ENCODE measurements at regions of chr13 and their contacts with region 1.

Region 1: GRCh38 chr13:48184260-48184659 is 48.7 kb upstream of the ITM2B start:
- DNase-seq: no peak
- H3K4me3 ChIP-seq: no peak overlapping the region
- H3K4me3 Mint-ChIP-seq: peak overlapping the region; percentile 2 to 87 (median 39)
- H3K27ac ChIP-seq: no peak overlapping the region
- H3K27ac Mint-ChIP-seq: peak overlapping the region; percentile 74 to 96 (median 80)
- H3K4me1 ChIP-seq: peaks cover 69% of the 10 kb centered on the region
- H3K4me1 Mint-ChIP-seq: peaks cover 45 to 67% (median 56%) of the 10 kb centered on the region in 4 donors
- H3K27me3 ChIP-seq: no peaks in the 10 kb centered on the region
- H3K27me3 Mint-ChIP-seq: no peaks in the 10 kb centered on the region

Region 2: DNA sequence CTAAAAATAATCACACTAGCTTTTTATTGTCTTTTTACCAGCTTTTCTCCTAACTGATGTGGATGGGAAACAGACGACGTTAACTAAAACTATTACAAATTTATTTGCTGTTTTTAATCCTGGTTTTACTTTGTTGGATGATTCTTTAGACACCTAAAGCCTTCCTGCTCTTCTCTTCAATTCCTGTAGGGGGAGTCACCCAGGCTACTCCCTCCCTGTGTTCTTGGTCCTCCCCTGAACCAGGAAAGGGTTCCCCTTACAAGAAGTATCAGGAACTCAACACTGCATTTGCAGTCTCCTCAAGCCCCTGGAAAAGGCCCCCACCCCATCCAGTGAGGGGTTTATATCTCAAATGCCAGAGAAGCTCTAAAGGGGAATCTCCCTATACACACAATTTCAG is 389.3 kb before region 1 on chr13:
- CTCF ChIA-PET with region 1: no interaction called
- POLR2A ChIA-PET with region 1: no interaction called
- intact Hi-C with region 1: no loop called
- DNase-seq: no peak
- H3K4me3 ChIP-seq: no peak overlapping the region
- H3K4me3 Mint-ChIP-seq: no peak overlapping the region
- H3K27ac ChIP-seq: no peak overlapping the region
- H3K27ac Mint-ChIP-seq: no peak overlapping the region
- H3K4me1 ChIP-seq: no peaks in the 10 kb centered on the region
- H3K4me1 Mint-ChIP-seq: no peaks in the 10 kb centered on the region
- H3K27me3 ChIP-seq: no peaks in the 10 kb centered on the region
- H3K27me3 Mint-ChIP-seq: peaks cover 0 to 2% of the 10 kb centered on the region in 2 donors

Region 3: GRCh38 chr13:48094781-48095502 is 89.3 kb before region 1 on chr13 and contains the start of gene MED4:
- CTCF ChIA-PET with region 1: no interaction called
- POLR2A ChIA-PET with region 1: no interaction called
- intact Hi-C with region 1: no loop called
- DNase-seq: peak; percentile 95 to 98 (median 97)
- H3K4me3 ChIP-seq: peak within 1 kb of the TSS; percentile 73 to 76
- H3K4me3 Mint-ChIP-seq: peak within 1 kb of the TSS; percentile 93 to 98 (median 96)
- H3K27ac ChIP-seq: peak within 1 kb of the TSS; percentile 96
- H3K27ac Mint-ChIP-seq: peak within 1 kb of the TSS; percentile 92 to 99 (median 98)
- H3K4me1 ChIP-seq: peaks cover 37% of the 10 kb centered on the region
- H3K4me1 Mint-ChIP-seq: peaks cover 24 to 54% (median 35%) of the 10 kb centered on the region in 4 donors
- H3K27me3 ChIP-seq: no peaks in the 10 kb centered on the region
- H3K27me3 Mint-ChIP-seq: peaks cover 0 to 2% of the 10 kb centered on the region in 2 donors
- total RNA-seq, gene MED4: 50.6 to 53.5 TPM

Region 4: GRCh38 chr13:48155848-48156247 is 28.4 kb before region 1 on chr13:
- CTCF ChIA-PET with region 1: interaction called, 6 read pairs
- POLR2A ChIA-PET with region 1: interaction called, 60 read pairs
- intact Hi-C with region 1: loop called (anchors 1 kb)
- DNase-seq: peak; percentile 69 to 83 (median 81)
- H3K4me3 ChIP-seq: peak overlapping the region in 1 of 2 donors; percentile 46
- H3K4me3 Mint-ChIP-seq: peak overlapping the region; percentile 40 to 84 (median 68)
- H3K27ac ChIP-seq: peak overlapping the region; percentile 78
- H3K27ac Mint-ChIP-seq: peak overlapping the region; percentile 85 to 98 (median 95)
- H3K4me1 ChIP-seq: peaks cover 89% of the 10 kb centered on the region
- H3K4me1 Mint-ChIP-seq: peaks cover 50 to 91% (median 75%) of the 10 kb centered on the region in 4 donors
- H3K27me3 ChIP-seq: no peaks in the 10 kb centered on the region
- H3K27me3 Mint-ChIP-seq: no peaks in the 10 kb centered on the region

Region 5: DNA sequence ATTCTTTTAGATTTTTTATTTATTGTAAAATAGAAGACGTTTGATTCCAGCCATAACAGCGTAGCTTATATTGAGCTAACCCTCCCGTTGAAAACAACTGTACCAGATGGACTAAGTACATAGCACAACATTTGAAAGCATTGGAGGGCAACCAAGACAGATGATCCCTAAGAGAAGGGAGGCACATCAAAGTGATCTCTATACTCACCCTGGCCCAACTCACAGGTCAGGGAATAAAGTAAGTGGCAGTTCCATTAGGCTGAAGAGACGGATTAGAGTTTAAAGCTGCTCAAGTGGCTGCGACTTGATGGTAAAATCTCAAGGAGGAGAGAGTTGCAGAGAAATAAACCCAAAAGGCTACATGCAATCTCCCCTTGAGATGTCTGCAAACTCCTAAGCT is 16.4 kb before region 1 on chr13:
- CTCF ChIA-PET with region 1: no interaction called
- POLR2A ChIA-PET with region 1: interaction called, 12 read pairs
- intact Hi-C with region 1: no loop called
- DNase-seq: no peak
- H3K4me3 ChIP-seq: no peak overlapping the region
- H3K4me3 Mint-ChIP-seq: no peak overlapping the region
- H3K27ac ChIP-seq: no peak overlapping the region
- H3K27ac Mint-ChIP-seq: peak overlapping the region in 2 of 7 donors; percentile 36 to 48
- H3K4me1 ChIP-seq: no peaks in the 10 kb centered on the region
- H3K4me1 Mint-ChIP-seq: peaks cover 0 to 3% (median 0%) of the 10 kb centered on the region in 4 donors
- H3K27me3 ChIP-seq: no peaks in the 10 kb centered on the region
- H3K27me3 Mint-ChIP-seq: no peaks in the 10 kb centered on the region